ENCODE measurements at regions of chr19 and their contacts with region 1.

Region 1: GRCh38 chr19:48152551-48152950 is 17.6 kb downstream of the LIG1 start:
- DNase-seq: peak in 1 of 2 donors; percentile 79
- H3K4me3 ChIP-seq: no peak overlapping the region
- H3K27ac ChIP-seq: peak overlapping the region in 1 of 2 donors; percentile 18
- H3K4me1 ChIP-seq: no peaks in the 10 kb centered on the region
- H3K27me3 ChIP-seq: no peaks in the 10 kb centered on the region
- CTCF ChIP-seq: peak; percentile 83 to 88 (median 85)

Region 2: DNA sequence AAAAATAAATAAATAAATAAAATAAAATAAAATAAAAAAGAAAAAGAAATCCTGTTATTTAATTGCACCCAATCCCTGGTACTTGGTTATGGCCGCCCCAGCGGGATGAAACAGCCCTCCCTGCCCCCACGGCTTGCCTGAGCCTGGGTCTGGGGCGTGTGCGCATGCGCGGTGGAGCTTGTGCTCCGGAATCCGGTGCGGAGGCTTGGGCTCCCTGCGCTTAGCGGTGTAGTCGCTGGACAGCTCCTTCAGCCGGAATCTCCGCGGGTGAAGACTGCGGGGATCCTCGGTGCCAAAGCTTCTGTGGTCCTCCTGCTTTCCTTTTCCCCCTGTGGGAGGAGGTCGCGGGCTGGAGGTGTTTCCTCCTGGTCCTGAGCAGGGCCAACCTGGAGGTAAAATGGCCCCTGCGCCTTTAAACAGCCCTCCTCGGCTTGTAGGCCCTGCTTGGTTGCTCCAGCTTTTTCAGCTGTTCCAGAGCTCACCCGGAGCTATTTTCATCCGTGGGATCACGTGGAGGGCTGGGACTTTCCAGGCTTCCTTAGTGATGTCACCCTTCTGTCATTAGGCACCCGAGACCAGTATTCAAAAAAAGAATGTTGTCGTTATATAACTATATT is 42.1 kb before region 1 on chr19 and contains the start of gene PLA2G4C:
- intact Hi-C with region 1: loop called (anchors 1 kb)
- DNase-seq: peak; percentile 75 to 95
- H3K4me3 ChIP-seq: peak within 1 kb of the TSS; percentile 56 to 59
- H3K27ac ChIP-seq: peak within 1 kb of the TSS; percentile 91 to 93
- H3K4me1 ChIP-seq: peaks cover 0 to 17% of the 10 kb centered on the region in 2 donors
- H3K27me3 ChIP-seq: no peaks in the 10 kb centered on the region
- CTCF ChIP-seq: no peak
- total RNA-seq, gene PLA2G4C: 110 TPM

Region 3: GRCh38 chr19:48292798-48293197 is 140.2 kb after region 1 on chr19:
- intact Hi-C with region 1: no loop called
- DNase-seq: no peak
- H3K4me3 ChIP-seq: no peak overlapping the region
- H3K27ac ChIP-seq: no peak overlapping the region
- H3K4me1 ChIP-seq: peaks cover 7 to 8% of the 10 kb centered on the region in 2 donors
- H3K27me3 ChIP-seq: no peaks in the 10 kb centered on the region
- CTCF ChIP-seq: no peak